ENCODE measurements at regions of chr11 and their contacts with region 1.

Region 1: DNA sequence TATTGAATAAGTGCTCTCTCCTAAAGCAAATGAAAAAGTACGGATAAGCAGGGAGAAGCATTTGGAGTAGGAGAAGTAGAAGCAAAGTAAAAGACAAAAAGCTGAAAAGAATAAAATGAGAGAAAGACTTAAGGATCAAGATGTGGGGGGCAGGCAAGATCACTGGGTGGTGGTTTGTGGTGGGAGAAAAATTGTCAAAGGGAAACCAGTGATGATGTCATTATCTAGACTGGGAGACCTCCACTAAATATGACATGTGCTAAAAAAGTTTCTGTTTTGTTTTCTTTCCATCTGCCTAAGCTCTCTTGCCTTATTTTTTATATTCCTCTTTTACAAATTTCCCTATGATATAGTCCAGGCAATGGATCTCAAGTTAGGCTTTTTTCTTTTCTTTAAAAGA is 14.8 kb upstream of the MAML2 start:
- DNase-seq: peak in 4 of 9 experiments; percentile 9 to 63 (median 24)
- ATAC-seq: peak; percentile 90
- H3K4me3 ChIP-seq: no peak overlapping the region
- H3K4me3 Mint-ChIP-seq: no peak overlapping the region
- H3K27ac ChIP-seq: no peak overlapping the region
- H3K27ac Mint-ChIP-seq: peak overlapping the region; percentile 10
- H3K4me1 ChIP-seq: peaks cover 5% of the 10 kb centered on the region
- H3K4me1 Mint-ChIP-seq: peaks cover 17% of the 10 kb centered on the region
- H3K27me3 ChIP-seq: no peaks in the 10 kb centered on the region
- H3K27me3 Mint-ChIP-seq: no peaks in the 10 kb centered on the region
- CTCF ChIP-seq: no peak

Region 2: GRCh38 chr11:96314326-96315020 is 43.3 kb before region 1 on chr11:
- CTCF ChIA-PET with region 1: no interaction called
- POLR2A ChIA-PET with region 1: interaction called, 3 read pairs
- intact Hi-C with region 1: loop called in 1 of 2 experiments (anchors 2 kb)
- DNase-seq: peak in 1 of 9 experiments; percentile 21
- ATAC-seq: no peak
- H3K4me3 ChIP-seq: no peak overlapping the region
- H3K4me3 Mint-ChIP-seq: peak overlapping the region; percentile 9
- H3K27ac ChIP-seq: peak overlapping the region in 1 of 2 experiments; percentile 23
- H3K27ac Mint-ChIP-seq: peak overlapping the region; percentile 81
- H3K4me1 ChIP-seq: peaks cover 62% of the 10 kb centered on the region
- H3K4me1 Mint-ChIP-seq: peaks cover 88% of the 10 kb centered on the region
- H3K27me3 ChIP-seq: no peaks in the 10 kb centered on the region
- H3K27me3 Mint-ChIP-seq: no peaks in the 10 kb centered on the region
- CTCF ChIP-seq: no peak

Region 3: DNA sequence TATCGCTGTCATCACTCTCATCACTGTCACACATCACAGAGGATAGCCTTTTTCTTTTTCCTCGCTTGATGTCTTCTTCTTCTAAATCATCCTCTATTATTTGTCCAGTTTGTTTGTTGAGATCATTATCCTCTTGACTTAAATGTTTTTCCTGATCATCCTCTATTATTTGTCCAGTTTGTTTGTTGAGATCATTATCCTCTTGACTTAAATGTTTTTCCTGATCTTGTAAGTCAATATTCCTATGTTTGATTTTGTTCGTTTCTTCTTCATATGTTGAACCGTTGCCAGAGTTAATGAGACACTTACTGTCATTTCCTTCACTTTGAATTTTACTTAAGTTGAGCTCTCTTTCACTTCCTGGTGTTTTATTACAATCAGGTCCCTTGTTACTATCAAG is 26.4 kb after region 1 on chr11:
- CTCF ChIA-PET with region 1: no interaction called
- POLR2A ChIA-PET with region 1: no interaction called
- intact Hi-C with region 1: loop called in 1 of 2 experiments (anchors 2 kb)
- DNase-seq: no peak
- ATAC-seq: no peak
- H3K4me3 ChIP-seq: no peak overlapping the region
- H3K4me3 Mint-ChIP-seq: peak overlapping the region; percentile 20
- H3K27ac ChIP-seq: no peak overlapping the region
- H3K27ac Mint-ChIP-seq: peak overlapping the region; percentile 69
- H3K4me1 ChIP-seq: peaks cover 12% of the 10 kb centered on the region
- H3K4me1 Mint-ChIP-seq: peaks cover 45% of the 10 kb centered on the region
- H3K27me3 ChIP-seq: no peaks in the 10 kb centered on the region
- H3K27me3 Mint-ChIP-seq: no peaks in the 10 kb centered on the region
- CTCF ChIP-seq: no peak

Measured in CD8-positive, alpha-beta T cell (primary cell).